HEK293 (cell line): ENCODE measurements at regions of chr12 and their contacts with region 1.

Region 1: GRCh38 chr12:124036674-124037109 is 63.7 kb downstream of the ZNF664 start:
- H3K4me3 ChIP-seq: no peak overlapping the region
- H3K27ac ChIP-seq: no peak overlapping the region
- H3K4me1 ChIP-seq: peaks cover 2% of the 10 kb centered on the region; the same call in 1 of the 2 replicates
- CTCF ChIP-seq: peak; percentile 62; the same call in 1 of the 2 replicates

Region 2: DNA sequence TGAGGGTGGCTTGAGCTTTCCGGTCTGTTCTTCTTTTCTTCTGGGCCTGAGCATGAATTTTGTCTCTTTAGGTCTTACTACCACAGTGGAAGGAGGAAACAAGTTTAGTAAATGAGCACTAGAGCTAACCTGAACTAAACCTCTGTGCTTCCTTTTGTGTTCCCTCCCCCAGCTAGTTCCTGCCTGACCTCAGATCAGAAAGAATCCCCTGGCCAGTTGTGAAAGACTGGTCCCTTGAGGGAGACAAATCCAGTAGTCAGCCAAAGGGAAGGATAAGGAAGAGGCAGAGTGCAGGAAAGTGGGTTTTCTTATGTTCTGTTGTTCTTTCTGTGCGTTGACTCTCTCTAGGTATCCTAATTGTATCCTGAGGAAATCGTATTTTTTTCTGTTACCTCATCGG is 46.2 kb before region 1 on chr12:
- CTCF ChIA-PET with region 1: interaction called, 10 read pairs
- POLR2A ChIA-PET with region 1: no interaction called
- H3K4me3 ChIP-seq: no peak overlapping the region
- H3K27ac ChIP-seq: no peak overlapping the region
- H3K4me1 ChIP-seq: peaks cover 4% of the 10 kb centered on the region; the same call in 1 of the 2 replicates
- CTCF ChIP-seq: no peak

Region 3: DNA sequence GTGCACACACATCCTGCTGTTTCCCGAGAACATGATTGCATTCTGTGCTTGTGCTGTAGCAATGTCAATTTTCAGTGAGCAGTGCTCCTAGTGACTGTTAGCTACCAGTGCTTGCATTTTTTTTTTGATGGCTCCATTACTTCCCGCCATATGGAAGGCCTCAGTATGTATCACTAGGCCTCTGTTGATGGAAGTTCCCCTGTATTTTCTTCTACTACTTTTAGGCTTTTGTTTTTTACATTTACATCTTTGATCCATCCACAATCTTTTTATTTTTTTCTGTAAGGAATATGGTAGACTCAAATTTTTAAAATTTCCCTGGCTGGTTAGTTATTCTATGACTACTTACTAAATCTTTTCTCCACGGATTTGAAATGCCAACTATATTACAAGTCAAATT is 14.5 kb before region 1 on chr12:
- CTCF ChIA-PET with region 1: interaction called, 10 read pairs
- POLR2A ChIA-PET with region 1: no interaction called
- H3K4me3 ChIP-seq: no peak overlapping the region
- H3K27ac ChIP-seq: no peak overlapping the region
- H3K4me1 ChIP-seq: no peaks in the 10 kb centered on the region
- CTCF ChIP-seq: no peak

Region 4: DNA sequence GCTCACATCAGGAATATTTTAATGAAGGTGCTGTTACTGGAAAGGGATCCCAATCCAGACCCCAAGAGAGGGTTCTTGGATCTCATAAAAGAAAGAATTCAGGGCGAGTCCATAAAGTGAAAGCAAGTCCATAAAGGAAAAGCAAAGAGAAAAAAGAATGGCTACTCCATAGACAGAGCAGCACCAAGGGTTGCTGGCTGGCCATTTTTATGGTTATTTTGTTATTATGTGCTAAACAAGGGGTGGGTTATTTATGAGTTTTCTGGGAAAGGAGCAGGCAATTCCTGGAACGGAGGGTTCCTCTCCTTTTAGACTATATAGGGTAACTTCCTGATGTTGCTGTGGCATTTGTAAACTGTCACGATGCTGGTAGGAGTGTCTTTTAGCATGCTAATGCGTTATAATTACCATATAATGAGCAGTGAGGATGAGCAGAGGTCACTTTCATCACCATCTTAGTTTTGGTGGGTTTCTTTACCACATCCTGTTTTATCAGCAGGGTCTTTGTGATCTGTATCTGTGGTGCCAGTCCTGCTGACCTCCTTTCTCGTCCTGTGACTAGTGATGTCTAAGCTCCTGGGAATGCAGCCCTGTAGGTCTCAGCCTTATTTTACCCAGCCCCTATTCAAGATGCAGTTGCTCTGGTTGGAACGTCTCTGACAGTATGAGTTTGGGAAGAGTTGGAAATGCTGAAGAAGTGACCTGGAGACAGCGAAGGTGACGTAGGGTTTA is 36.8 kb after region 1 on chr12:
- CTCF ChIA-PET with region 1: no interaction called
- POLR2A ChIA-PET with region 1: no interaction called
- H3K4me3 ChIP-seq: no peak overlapping the region
- H3K27ac ChIP-seq: no peak overlapping the region
- H3K4me1 ChIP-seq: no peaks in the 10 kb centered on the region
- CTCF ChIP-seq: no peak

Region 5: DNA sequence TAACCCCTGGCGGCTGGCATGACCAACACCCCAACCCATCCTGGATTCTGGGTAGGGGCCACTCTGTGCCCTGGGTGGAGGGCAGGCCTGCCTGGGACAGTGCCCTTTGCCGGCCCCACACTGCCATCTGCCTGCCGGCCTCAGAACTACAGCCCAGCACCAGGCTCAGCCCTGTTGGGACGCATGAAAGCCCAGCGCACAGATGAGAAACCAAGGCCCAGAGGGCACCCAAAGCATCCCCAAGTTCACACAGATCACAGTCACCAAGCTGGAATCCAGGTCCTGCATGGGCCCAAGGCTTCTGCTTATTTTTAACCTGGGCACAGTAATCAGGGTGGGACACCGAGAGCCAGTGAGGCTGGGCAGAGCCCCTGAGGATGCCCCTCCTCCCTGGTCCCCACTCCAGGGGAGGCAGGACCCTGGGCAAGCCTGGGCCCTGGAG is 284.4 kb after region 1 on chr12:
- CTCF ChIA-PET with region 1: interaction called, 25 read pairs
- POLR2A ChIA-PET with region 1: no interaction called
- H3K4me3 ChIP-seq: no peak overlapping the region
- H3K27ac ChIP-seq: no peak overlapping the region
- H3K4me1 ChIP-seq: no peaks in the 10 kb centered on the region
- CTCF ChIP-seq: peak; percentile 87

Region 6: DNA sequence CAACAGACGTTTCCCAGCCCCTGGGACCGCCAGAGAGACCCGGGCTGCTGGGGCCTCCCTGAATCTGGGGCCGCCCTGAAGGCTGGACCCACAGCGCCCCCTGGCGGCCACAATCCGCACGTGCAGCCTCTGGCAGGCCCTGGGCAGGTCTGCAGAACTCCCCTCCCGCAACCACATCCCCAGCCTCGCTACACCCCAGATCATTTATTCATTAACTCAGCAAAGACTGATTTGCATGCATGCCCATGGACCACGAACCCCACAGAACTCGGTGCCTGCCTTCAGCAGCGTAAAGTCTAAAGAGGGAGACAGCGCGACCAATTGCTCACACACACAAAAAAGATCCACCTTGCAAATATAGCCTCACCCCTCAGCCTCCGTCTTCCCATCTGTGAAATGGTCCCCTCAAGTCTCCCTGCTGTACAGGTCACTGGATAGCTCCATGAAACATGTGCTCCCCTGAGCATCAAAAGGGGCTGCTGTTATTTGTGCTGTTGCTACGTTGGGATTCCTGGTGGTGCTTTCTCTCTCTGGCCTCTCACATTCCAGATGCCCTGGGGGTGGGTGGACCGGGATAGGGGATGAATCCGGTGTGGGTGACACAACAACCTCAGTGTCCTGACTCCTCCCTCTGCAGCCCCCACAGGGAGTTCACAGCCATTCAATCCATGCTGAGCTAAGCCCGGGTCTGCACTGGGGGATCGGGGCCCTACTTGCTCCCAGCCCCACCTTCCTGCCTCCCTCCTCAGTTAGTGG is 730.6 kb after region 1 on chr12:
- CTCF ChIA-PET with region 1: interaction called, 52 read pairs
- POLR2A ChIA-PET with region 1: no interaction called
- H3K4me3 ChIP-seq: no peak overlapping the region
- H3K27ac ChIP-seq: no peak overlapping the region
- H3K4me1 ChIP-seq: no peaks in the 10 kb centered on the region
- CTCF ChIP-seq: peak; percentile 89

Region 7: GRCh38 chr12:124917135-124917840 is 880.6 kb after region 1 on chr12:
- CTCF ChIA-PET with region 1: interaction called, 11 read pairs
- POLR2A ChIA-PET with region 1: no interaction called
- H3K4me3 ChIP-seq: peak overlapping the region; percentile 38
- H3K27ac ChIP-seq: peak overlapping the region; percentile 77
- H3K4me1 ChIP-seq: peaks cover 24% of the 10 kb centered on the region
- CTCF ChIP-seq: no peak